ENCODE measurements at regions of chr6 and their contacts with region 1.

Region 1: GRCh38 chr6:37566111-37566949 is 66.6 kb upstream of the CCDC167 start:
- DNase-seq: peak; percentile 49
- ATAC-seq: peak; percentile 88
- H3K4me3 ChIP-seq: peak overlapping the region; percentile 17; the same call in 1 of the 2 replicates
- H3K27ac ChIP-seq: no peak overlapping the region
- H3K4me1 ChIP-seq: no peaks in the 10 kb centered on the region
- H3K27me3 ChIP-seq: no peaks in the 10 kb centered on the region
- CTCF ChIP-seq: peak; percentile 94

Region 2: GRCh38 chr6:37442416-37443215 is 123.7 kb before region 1 on chr6:
- CTCF ChIA-PET with region 1: no interaction called
- POLR2A ChIA-PET with region 1: no interaction called
- intact Hi-C with region 1: no loop called
- DNase-seq: no peak
- ATAC-seq: 0 out of 2 replicates have a peak, but pooled peaks have one; percentile 11
- H3K4me3 ChIP-seq: no peak overlapping the region
- H3K27ac ChIP-seq: no peak overlapping the region
- H3K4me1 ChIP-seq: peaks cover 7% of the 10 kb centered on the region
- H3K27me3 ChIP-seq: no peaks in the 10 kb centered on the region
- CTCF ChIP-seq: no peak

Region 3: GRCh38 chr6:37483917-37484785 is 82.2 kb before region 1 on chr6:
- CTCF ChIA-PET with region 1: no interaction called
- POLR2A ChIA-PET with region 1: no interaction called
- intact Hi-C with region 1: loop called (anchors 5 kb)
- DNase-seq: peak; percentile 56
- ATAC-seq: peak; percentile 73
- H3K4me3 ChIP-seq: no peak overlapping the region
- H3K27ac ChIP-seq: no peak overlapping the region
- H3K4me1 ChIP-seq: no peaks in the 10 kb centered on the region
- H3K27me3 ChIP-seq: no peaks in the 10 kb centered on the region
- CTCF ChIP-seq: peak; percentile 77

Region 4: DNA sequence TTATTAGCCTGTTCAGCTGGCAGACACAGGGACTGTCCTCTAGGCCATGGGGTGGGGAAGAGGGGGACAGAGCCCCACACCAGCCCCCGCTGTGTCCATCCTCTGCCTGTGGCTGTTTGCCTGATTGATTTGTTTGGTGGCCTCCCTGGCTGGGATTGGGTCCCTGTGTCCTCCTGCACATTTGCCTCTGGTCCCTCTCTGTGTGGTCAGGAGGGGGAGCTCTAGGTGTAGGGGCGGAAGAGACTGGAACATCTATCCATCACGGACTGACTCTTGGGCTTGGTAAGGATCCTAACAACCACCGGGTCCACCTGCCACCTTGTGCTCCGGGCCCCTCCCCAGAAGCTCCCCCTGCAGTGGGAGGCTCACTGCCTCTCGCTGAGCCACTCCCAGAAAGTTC is 28.2 kb before region 1 on chr6:
- CTCF ChIA-PET with region 1: no interaction called
- POLR2A ChIA-PET with region 1: no interaction called
- intact Hi-C with region 1: loop called (anchors 1 kb)
- DNase-seq: peak; percentile 70
- ATAC-seq: peak; percentile 88
- H3K4me3 ChIP-seq: no peak overlapping the region
- H3K27ac ChIP-seq: no peak overlapping the region
- H3K4me1 ChIP-seq: no peaks in the 10 kb centered on the region
- H3K27me3 ChIP-seq: peaks cover 13% of the 10 kb centered on the region; the same call in 1 of the 2 replicates
- CTCF ChIP-seq: peak; percentile 80

Region 5: DNA sequence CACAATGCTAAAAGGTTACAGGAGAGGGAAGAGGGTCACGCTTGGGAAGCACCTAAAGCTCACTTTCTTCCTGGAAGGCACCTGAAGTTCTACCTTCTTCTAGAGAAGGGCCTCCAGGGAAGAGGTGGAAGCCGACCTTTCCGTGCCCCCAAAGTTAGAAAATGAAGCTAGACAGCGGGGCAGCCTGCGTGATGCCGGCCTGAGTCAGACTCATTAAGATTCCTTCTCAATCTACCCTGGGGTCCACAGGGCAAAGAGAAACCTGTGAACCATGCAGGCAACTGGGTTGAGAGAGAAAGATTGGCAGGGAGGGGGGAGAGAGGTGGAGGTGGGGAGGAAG is 11.9 kb before region 1 on chr6:
- CTCF ChIA-PET with region 1: interaction called, 11 read pairs
- POLR2A ChIA-PET with region 1: no interaction called
- intact Hi-C with region 1: no loop called
- DNase-seq: peak; percentile 75
- ATAC-seq: peak; percentile 55; the same call in 1 of the 2 replicates
- H3K4me3 ChIP-seq: peak overlapping the region; percentile 45
- H3K27ac ChIP-seq: peak overlapping the region; percentile 62
- H3K4me1 ChIP-seq: peaks cover 42% of the 10 kb centered on the region
- H3K27me3 ChIP-seq: no peaks in the 10 kb centered on the region
- CTCF ChIP-seq: no peak